Activated T-helper 1 cell treated with anti-CD3 and anti-CD28 coated beads, Interleukin-12 subunit alpha, Interleukin-12 subunit beta, Interleukin-2, Interleukin-4 antibody, amounts not matched to agents 30 ng/mL and 10 ng/mL and 1 ng/mL, durations not matched to agents 14 hours and 24 hours and 36 hours (primary cell): ENCODE measurements at regions of chr5 and their contacts with region 1.

Region 1: DNA sequence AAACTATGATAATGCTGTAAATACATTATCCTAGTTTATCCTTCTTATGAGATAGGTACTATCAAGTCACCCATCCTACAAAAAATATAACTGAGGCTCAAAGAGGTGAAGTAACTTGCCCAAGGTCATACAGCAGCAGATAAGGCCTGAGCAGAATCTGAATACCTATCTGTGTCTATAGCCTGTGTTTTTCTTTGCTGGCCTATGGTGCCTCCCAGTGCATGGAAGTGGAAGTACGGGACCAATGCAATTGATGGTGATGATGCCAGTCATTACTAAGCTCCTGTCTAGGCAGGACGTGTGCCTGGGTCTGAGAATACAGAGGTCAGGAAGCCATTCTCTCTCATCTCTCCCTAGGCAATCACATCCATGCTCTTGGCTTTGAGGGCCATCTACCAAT is 67.8 kb downstream of the FAT2 start:
- DNase-seq: peak; percentile 15
- H3K4me3 Mint-ChIP-seq: no peak overlapping the region
- H3K27ac Mint-ChIP-seq: no peak overlapping the region
- H3K4me1 Mint-ChIP-seq: no peaks in the 10 kb centered on the region
- H3K27me3 Mint-ChIP-seq: peaks cover 2% of the 10 kb centered on the region

Region 2: DNA sequence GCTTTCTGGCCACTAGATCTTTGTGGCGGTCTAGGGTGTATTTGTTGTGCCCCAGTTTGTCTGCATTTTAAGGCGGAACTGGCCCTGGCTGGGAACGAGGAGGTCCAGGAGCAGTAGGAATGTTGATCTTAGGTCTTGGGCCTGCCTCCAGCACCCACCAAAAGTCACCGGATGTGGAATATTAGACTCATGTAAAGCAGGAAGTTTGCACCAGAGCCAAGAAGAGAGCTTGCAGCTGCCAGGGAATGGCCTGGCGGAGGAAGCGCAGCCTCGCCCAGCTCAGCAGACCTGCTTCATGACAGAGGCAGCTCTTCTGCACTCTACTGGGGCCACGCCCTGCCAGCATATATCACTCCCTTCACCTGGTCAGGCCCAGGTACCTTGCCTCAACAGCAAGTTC is 499.7 kb before region 1 on chr5:
- intact Hi-C with region 1: no loop called
- DNase-seq: no peak
- H3K4me3 Mint-ChIP-seq: no peak overlapping the region
- H3K27ac Mint-ChIP-seq: no peak overlapping the region
- H3K4me1 Mint-ChIP-seq: peaks cover 17% of the 10 kb centered on the region
- H3K27me3 Mint-ChIP-seq: peaks cover 15% of the 10 kb centered on the region

Region 3: DNA sequence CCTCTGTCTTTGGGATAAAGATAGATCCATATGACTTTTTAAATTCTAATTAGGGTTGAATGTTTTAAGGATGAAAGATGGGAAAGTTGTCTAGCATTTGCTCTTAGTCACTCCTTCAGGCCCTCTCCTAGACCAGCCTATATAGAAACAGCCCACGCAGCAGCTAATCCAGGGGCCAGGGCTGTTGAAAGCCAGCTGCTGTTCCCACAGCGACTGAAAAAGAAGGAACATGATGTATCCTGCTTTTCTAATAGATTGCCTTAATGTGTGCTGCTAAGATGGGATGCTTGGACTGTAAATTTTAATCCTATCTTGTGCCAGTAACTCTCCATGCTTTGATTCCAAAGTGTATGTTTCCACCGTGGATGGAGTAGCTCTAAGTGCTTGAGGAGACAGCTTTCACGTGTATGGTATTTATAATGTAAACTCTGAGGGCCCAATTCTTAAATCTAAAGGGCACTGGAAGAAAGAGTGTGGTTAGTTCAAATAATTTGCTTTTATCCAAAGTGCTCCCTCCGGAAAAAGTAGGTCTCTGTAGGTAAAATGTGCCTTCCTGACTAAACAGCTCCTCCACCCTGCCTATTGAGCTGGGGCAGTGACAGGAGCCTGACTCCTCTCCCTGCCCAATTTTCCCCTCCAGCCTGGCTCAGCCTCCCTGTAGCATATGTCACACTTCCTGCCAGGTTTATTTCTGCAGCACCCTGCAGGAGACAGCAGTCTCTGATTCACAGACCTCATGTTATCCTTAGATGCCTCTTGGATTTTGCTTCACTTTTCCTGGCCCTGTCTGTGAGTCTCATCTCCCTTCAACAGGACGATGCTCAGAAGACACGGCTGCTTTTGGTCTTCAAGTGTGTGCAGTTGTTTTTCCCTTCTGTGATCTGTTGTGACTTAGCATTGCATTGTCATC is 42.7 kb before region 1 on chr5:
- intact Hi-C with region 1: no loop called
- DNase-seq: no peak
- H3K4me3 Mint-ChIP-seq: no peak overlapping the region
- H3K27ac Mint-ChIP-seq: no peak overlapping the region
- H3K4me1 Mint-ChIP-seq: no peaks in the 10 kb centered on the region
- H3K27me3 Mint-ChIP-seq: no peaks in the 10 kb centered on the region

Region 4: GRCh38 chr5:151577559-151577958 is 54.2 kb after region 1 on chr5:
- intact Hi-C with region 1: no loop called
- DNase-seq: no peak
- H3K4me3 Mint-ChIP-seq: no peak overlapping the region
- H3K27ac Mint-ChIP-seq: no peak overlapping the region
- H3K4me1 Mint-ChIP-seq: no peaks in the 10 kb centered on the region
- H3K27me3 Mint-ChIP-seq: peaks cover 5% of the 10 kb centered on the region

Region 5: DNA sequence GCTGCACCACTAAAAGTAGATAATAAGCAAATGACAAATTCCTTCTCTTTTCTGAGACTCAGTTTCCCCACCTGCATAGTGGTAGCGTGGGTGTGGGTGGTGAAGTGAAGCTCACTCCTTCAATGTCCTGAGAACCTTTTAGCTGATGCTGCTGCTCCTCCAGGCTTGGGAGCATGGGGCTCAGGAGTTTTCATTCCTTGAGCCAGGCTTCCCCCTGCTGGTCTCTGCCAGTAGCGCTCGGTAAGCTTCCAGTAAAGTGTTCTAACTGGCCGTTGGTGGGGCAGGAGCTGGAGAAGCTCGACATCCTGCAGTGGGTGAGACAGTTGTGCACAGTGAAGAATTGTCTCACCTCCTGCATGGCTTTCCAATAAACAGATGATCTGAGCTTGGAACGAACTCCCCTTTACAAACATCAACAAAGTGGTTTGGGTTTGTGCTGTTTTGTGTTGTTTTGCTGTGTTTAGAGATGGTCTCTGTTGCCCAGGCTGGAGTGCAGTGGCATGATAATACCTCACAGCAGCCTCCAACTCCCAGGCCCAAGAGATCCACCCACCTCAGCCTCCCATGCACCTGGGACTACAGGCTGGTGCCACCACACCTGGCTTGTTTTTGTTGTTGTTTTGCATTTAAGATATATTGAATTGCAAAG is 128.8 kb after region 1 on chr5:
- intact Hi-C with region 1: loop called (anchors 5 kb)
- DNase-seq: peak; percentile 46
- H3K4me3 Mint-ChIP-seq: no peak overlapping the region
- H3K27ac Mint-ChIP-seq: no peak overlapping the region
- H3K4me1 Mint-ChIP-seq: no peaks in the 10 kb centered on the region
- H3K27me3 Mint-ChIP-seq: peaks cover 11% of the 10 kb centered on the region

Region 6: GRCh38 chr5:151663617-151664293 is 140.4 kb after region 1 on chr5:
- intact Hi-C with region 1: no loop called
- DNase-seq: no peak
- H3K4me3 Mint-ChIP-seq: no peak overlapping the region
- H3K27ac Mint-ChIP-seq: no peak overlapping the region
- H3K4me1 Mint-ChIP-seq: peaks cover 12% of the 10 kb centered on the region
- H3K27me3 Mint-ChIP-seq: peaks cover 7% of the 10 kb centered on the region